CD8-positive, alpha-beta T cell (primary cell): ENCODE measurements at regions of chr3 and their contacts with region 1.

Region 1: GRCh38 chr3:151168269-151169094 is 34.5 kb downstream of the GPR171 start:
- DNase-seq: peak; percentile 54 to 89 (median 82)
- ATAC-seq: peak; percentile 76
- H3K4me3 ChIP-seq: no peak overlapping the region
- H3K4me3 Mint-ChIP-seq: no peak overlapping the region
- H3K27ac ChIP-seq: no peak overlapping the region
- H3K27ac Mint-ChIP-seq: no peak overlapping the region
- H3K4me1 ChIP-seq: peaks cover 38% of the 10 kb centered on the region
- H3K4me1 Mint-ChIP-seq: peaks cover 34% of the 10 kb centered on the region
- H3K27me3 ChIP-seq: no peaks in the 10 kb centered on the region
- H3K27me3 Mint-ChIP-seq: no peaks in the 10 kb centered on the region
- CTCF ChIP-seq: peak; percentile 97

Region 2: DNA sequence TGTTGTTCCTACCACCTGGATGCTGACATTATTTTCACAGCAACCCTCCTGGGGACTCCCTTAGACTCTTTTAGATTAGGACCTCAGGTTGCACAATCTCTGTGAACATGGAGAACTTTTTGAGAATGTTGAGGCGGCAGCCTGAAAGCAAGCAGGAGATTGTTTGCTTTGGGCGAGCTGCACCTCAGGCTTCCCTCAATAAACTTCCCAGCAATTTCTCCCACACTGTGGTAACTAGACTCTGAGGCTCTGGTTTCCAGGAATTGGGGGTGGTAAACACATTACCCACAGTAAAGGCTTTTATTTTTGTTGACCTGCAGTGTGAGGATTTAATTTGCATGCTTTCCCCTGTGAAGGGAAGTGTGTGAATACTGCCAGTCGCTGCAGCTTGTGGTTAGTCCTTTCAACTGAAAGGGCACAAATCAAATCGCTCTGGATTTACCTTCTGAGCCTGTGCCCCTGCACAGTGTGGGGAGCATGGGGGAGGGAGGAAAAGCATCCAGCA is 370.3 kb before region 1 on chr3:
- CTCF ChIA-PET with region 1: no interaction called
- POLR2A ChIA-PET with region 1: no interaction called
- intact Hi-C with region 1: no loop called
- DNase-seq: no peak
- ATAC-seq: no peak
- H3K4me3 ChIP-seq: no peak overlapping the region
- H3K4me3 Mint-ChIP-seq: no peak overlapping the region
- H3K27ac ChIP-seq: no peak overlapping the region
- H3K27ac Mint-ChIP-seq: no peak overlapping the region
- H3K4me1 ChIP-seq: no peaks in the 10 kb centered on the region
- H3K4me1 Mint-ChIP-seq: peaks cover 4% of the 10 kb centered on the region
- H3K27me3 ChIP-seq: peaks cover 0 to 4% of the 10 kb centered on the region in 2 experiments
- H3K27me3 Mint-ChIP-seq: peaks cover 5% of the 10 kb centered on the region
- CTCF ChIP-seq: no peak

Region 3: DNA sequence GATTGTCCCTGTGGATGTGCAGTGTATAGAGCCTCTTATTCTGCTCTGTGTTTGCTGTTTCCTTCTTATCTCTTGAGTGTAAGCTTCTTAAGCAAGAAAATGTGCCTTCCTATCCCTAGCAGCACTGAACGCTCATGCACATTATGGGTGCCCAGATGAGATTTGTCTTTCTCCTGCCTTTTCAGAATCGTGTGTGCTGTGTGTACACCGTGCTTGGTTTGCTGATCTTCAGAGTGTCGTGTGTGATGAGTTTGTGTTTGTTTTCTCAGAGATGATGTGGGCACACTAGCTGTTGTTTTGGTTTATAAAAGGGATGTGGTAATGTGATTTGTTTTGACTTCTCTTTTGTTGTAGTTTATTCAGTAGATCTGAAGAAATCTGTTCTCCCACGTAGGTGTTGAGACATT is 14.8 kb after region 1 on chr3:
- CTCF ChIA-PET with region 1: interaction called, 23 read pairs
- POLR2A ChIA-PET with region 1: interaction called, 7 read pairs
- intact Hi-C with region 1: loop called in 1 of 2 experiments (anchors 1 kb)
- DNase-seq: peak in 2 of 9 experiments; percentile 25 to 47
- ATAC-seq: peak; percentile 76
- H3K4me3 ChIP-seq: peak overlapping the region in 1 of 2 experiments; percentile 0
- H3K4me3 Mint-ChIP-seq: peak overlapping the region; percentile 68
- H3K27ac ChIP-seq: peak overlapping the region in 1 of 2 experiments; percentile 2
- H3K27ac Mint-ChIP-seq: peak overlapping the region; percentile 77
- H3K4me1 ChIP-seq: peaks cover 14% of the 10 kb centered on the region
- H3K4me1 Mint-ChIP-seq: peaks cover 39% of the 10 kb centered on the region
- H3K27me3 ChIP-seq: no peaks in the 10 kb centered on the region
- H3K27me3 Mint-ChIP-seq: no peaks in the 10 kb centered on the region
- CTCF ChIP-seq: no peak

Region 4: GRCh38 chr3:151210676-151211381 is 42.3 kb after region 1 on chr3:
- CTCF ChIA-PET with region 1: interaction called, 81 read pairs
- POLR2A ChIA-PET with region 1: interaction called, 3 read pairs
- intact Hi-C with region 1: loop called (anchors 1 to 5 kb)
- DNase-seq: peak in 2 of 9 experiments; percentile 23 to 45
- ATAC-seq: peak; percentile 34
- H3K4me3 ChIP-seq: peak overlapping the region in 1 of 2 experiments; percentile 10
- H3K4me3 Mint-ChIP-seq: peak overlapping the region; percentile 32
- H3K27ac ChIP-seq: peak overlapping the region in 1 of 2 experiments; percentile 9
- H3K27ac Mint-ChIP-seq: peak overlapping the region; percentile 57
- H3K4me1 ChIP-seq: peaks cover 12% of the 10 kb centered on the region
- H3K4me1 Mint-ChIP-seq: peaks cover 43% of the 10 kb centered on the region
- H3K27me3 ChIP-seq: no peaks in the 10 kb centered on the region
- H3K27me3 Mint-ChIP-seq: no peaks in the 10 kb centered on the region
- CTCF ChIP-seq: no peak

Region 5: GRCh38 chr3:151268267-151269235 is 100.1 kb after region 1 on chr3:
- CTCF ChIA-PET with region 1: interaction called, 11 read pairs
- POLR2A ChIA-PET with region 1: no interaction called
- intact Hi-C with region 1: no loop called
- DNase-seq: peak in 6 of 9 experiments; percentile 27 to 73 (median 46)
- ATAC-seq: peak; percentile 73
- H3K4me3 ChIP-seq: no peak overlapping the region
- H3K4me3 Mint-ChIP-seq: peak overlapping the region; percentile 78
- H3K27ac ChIP-seq: peak overlapping the region in 1 of 2 experiments; percentile 58
- H3K27ac Mint-ChIP-seq: peak overlapping the region; percentile 94
- H3K4me1 ChIP-seq: peaks cover 13% of the 10 kb centered on the region
- H3K4me1 Mint-ChIP-seq: peaks cover 25% of the 10 kb centered on the region
- H3K27me3 ChIP-seq: no peaks in the 10 kb centered on the region
- H3K27me3 Mint-ChIP-seq: no peaks in the 10 kb centered on the region
- CTCF ChIP-seq: no peak

Region 6: DNA sequence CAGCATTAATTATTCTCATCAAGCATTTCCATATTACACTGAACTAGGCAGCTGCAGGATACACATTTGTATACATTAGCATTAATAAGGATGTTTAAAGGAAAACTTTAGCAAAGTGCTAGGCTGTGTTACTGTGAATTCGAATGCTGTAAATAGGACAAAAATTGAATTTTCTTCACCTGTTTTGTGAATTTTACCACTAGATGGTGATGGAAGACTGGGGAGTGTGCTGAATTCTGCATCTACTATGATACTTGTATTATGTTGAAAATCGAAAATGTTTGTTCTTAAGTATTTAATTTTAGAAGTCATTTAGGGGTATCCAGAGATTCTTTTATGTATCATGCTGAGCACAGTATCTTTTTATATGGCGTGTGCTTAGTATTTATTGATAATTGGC is 122.2 kb after region 1 on chr3:
- CTCF ChIA-PET with region 1: interaction called, 333 read pairs
- POLR2A ChIA-PET with region 1: no interaction called
- intact Hi-C with region 1: no loop called
- DNase-seq: no peak
- ATAC-seq: no peak
- H3K4me3 ChIP-seq: no peak overlapping the region
- H3K4me3 Mint-ChIP-seq: no peak overlapping the region
- H3K27ac ChIP-seq: no peak overlapping the region
- H3K27ac Mint-ChIP-seq: no peak overlapping the region
- H3K4me1 ChIP-seq: no peaks in the 10 kb centered on the region
- H3K4me1 Mint-ChIP-seq: no peaks in the 10 kb centered on the region
- H3K27me3 ChIP-seq: no peaks in the 10 kb centered on the region
- H3K27me3 Mint-ChIP-seq: no peaks in the 10 kb centered on the region
- CTCF ChIP-seq: no peak

Region 7: GRCh38 chr3:151918253-151919029 is 750.0 kb after region 1 on chr3:
- CTCF ChIA-PET with region 1: no interaction called
- POLR2A ChIA-PET with region 1: no interaction called
- intact Hi-C with region 1: loop called (anchors 2 to 10 kb)
- DNase-seq: peak in 2 of 9 experiments; percentile 46 to 64
- ATAC-seq: no peak
- H3K4me3 ChIP-seq: no peak overlapping the region
- H3K4me3 Mint-ChIP-seq: no peak overlapping the region
- H3K27ac ChIP-seq: no peak overlapping the region
- H3K27ac Mint-ChIP-seq: no peak overlapping the region
- H3K4me1 ChIP-seq: no peaks in the 10 kb centered on the region
- H3K4me1 Mint-ChIP-seq: no peaks in the 10 kb centered on the region
- H3K27me3 ChIP-seq: no peaks in the 10 kb centered on the region
- H3K27me3 Mint-ChIP-seq: no peaks in the 10 kb centered on the region
- CTCF ChIP-seq: peak; percentile 63